ENCODE measurements at regions of chr4 and their contacts with region 1.

Region 1: DNA sequence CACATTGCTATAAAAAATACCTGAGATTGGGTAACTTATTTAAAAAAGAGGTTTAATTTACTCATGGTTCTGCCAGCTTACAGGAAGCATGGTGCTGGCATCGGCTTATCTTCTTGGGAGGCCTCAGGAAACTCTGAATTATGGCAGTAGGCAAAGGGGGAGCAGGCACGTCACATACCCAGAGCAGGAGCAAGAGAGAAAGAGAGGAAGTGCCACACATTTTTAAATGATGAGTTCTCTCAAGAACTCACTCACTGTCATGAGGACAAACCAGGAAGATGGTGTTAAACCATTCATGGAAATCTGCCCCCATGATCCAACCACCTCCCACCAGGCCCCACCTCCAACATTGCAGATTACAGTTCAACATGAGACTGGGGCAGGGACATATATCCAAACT is 10.0 kb upstream of the AFF1 start:
- DNase-seq: no peak
- H3K4me3 ChIP-seq: no peak overlapping the region
- H3K27ac ChIP-seq: peak overlapping the region; percentile 31 to 41
- H3K4me1 ChIP-seq: peaks cover 0 to 2% of the 10 kb centered on the region in 2 donors
- H3K27me3 ChIP-seq: no peaks in the 10 kb centered on the region
- CTCF ChIP-seq: no peak

Region 2: DNA sequence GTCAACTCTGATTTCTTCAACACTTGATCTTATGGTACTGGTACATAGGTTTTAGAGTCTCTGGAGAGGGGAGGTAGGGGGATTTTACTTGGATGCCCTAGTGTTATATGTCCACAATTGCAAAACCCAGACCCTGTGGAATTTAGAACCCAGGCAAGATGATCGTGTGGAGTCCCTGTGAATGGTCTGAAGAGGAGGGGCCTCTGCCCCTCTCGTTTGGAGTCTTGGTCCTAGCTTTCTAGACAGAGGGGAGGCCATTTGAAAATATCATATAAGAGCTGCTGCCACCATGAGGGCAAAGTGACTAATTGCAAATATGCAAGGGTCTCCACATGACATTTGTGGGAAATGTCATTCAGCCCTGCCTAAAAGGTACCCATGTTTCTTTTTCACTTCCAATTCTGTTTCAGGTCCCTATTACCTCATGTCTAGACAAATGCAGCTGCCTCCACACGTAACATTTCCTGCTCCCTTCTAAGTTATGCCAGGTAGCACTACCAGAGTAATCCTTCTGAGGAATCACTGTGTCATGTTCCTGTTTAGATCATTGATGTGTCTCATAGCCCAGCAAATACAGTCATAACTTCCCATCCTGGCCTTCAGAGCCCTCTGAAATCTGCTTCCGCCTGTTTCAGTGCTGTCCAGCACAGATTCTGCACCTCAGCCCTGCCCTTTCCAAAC is 168.8 kb after region 1 on chr4:
- intact Hi-C with region 1: loop called (anchors 1 kb)
- DNase-seq: no peak
- H3K4me3 ChIP-seq: no peak overlapping the region
- H3K27ac ChIP-seq: peak overlapping the region in 1 of 2 donors; percentile 28
- H3K4me1 ChIP-seq: peaks cover 0 to 11% of the 10 kb centered on the region in 2 donors
- H3K27me3 ChIP-seq: no peaks in the 10 kb centered on the region
- CTCF ChIP-seq: peak; percentile 30 to 71 (median 57)

Region 3: DNA sequence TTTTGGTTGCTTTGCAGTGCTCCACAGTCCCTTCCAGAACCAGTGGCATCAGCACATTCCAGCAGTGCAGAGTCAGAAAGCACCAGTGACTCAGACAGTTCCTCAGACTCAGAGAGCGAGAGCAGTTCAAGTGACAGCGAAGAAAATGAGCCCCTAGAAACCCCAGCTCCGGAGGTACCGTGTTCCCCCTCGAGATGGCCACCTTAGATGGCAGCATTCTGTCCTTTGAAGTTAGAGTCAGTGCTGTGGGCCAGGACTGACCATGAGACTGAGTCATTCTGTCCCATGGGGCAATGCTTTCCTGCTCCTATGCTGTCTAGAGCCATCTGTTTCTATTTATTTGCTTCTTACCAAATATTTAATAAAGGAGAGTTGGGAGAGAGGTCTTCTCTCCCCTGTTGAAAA is 183.3 kb after region 1 on chr4:
- intact Hi-C with region 1: loop called (anchors 5 kb)
- DNase-seq: peak in 1 of 2 donors; percentile 84
- H3K4me3 ChIP-seq: peak overlapping the region in 1 of 2 donors; percentile 29
- H3K27ac ChIP-seq: peak overlapping the region; percentile 59
- H3K4me1 ChIP-seq: peaks cover 5 to 32% of the 10 kb centered on the region in 2 donors
- H3K27me3 ChIP-seq: no peaks in the 10 kb centered on the region
- CTCF ChIP-seq: no peak

Region 4: GRCh38 chr4:87235020-87235671 is 310.3 kb after region 1 on chr4:
- intact Hi-C with region 1: loop called (anchors 1 kb)
- DNase-seq: no peak
- H3K4me3 ChIP-seq: peak overlapping the region; percentile 50 to 56
- H3K27ac ChIP-seq: no peak overlapping the region
- H3K4me1 ChIP-seq: no peaks in the 10 kb centered on the region
- H3K27me3 ChIP-seq: no peaks in the 10 kb centered on the region
- CTCF ChIP-seq: no peak